ENCODE measurements at regions of chr12 and their contacts with region 1.

Region 1: GRCh38 chr12:56630160-56630632 is at the start of gene BAZ2A:
- DNase-seq: peak; percentile 93
- H3K4me3 Mint-ChIP-seq: peak within 1 kb of the TSS; percentile 98
- H3K27ac Mint-ChIP-seq: peak within 1 kb of the TSS; percentile 94
- H3K4me1 Mint-ChIP-seq: peaks cover 79% of the 10 kb centered on the region
- H3K27me3 Mint-ChIP-seq: no peaks in the 10 kb centered on the region
- total RNA-seq, gene BAZ2A: 78.3 to 80.0 TPM

Region 2: DNA sequence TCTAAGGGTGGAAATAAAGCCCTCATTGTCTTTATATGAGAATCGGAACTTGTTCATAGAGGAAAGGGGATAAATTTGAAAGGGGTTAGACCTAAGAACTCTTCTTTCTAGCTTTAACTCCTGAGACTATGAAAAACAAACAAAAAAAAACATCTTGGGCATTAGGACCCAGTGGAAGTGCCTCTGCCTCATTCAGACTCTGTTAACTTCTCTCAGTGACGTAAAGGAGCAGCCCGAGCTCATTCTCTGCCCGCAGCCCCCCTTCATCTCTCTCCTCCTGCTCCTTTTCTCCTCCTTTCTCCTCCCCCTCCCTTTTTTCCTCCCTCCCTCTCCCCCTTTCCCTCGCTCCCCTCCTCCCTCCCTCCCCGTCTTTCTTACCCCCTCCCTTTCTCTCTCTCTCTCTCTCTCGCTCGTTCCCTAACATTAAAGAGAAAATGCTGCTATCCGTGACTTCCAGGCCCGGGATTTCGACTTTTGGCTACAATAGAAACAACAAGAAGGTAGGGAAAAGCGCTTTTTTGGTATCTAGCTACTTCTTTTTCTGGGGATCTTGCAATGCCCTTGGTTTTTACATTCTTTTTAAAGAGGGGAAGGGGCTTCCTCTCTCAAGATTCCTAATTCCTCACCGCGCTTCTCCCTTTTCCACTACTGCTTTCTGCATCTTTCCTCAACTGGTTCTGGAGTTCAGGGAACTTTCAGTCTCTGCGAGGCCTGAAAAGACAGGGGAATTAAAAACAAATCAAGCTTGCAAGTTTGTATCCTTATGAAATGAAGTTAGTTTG is 108.4 kb before region 1 on chr12 and contains the start of gene RBMS2:
- CTCF ChIA-PET with region 1: no interaction called
- intact Hi-C with region 1: loop called (anchors 1 kb)
- DNase-seq: peak; percentile 56
- H3K4me3 Mint-ChIP-seq: peak within 1 kb of the TSS; percentile 62
- H3K27ac Mint-ChIP-seq: no peak within 1 kb of the TSS
- H3K4me1 Mint-ChIP-seq: peaks cover 28% of the 10 kb centered on the region
- H3K27me3 Mint-ChIP-seq: no peaks in the 10 kb centered on the region
- total RNA-seq, gene RBMS2: 2.5 to 5.1 TPM

Region 3: GRCh38 chr12:56578983-56579546 is 51.1 kb before region 1 on chr12:
- CTCF ChIA-PET with region 1: no interaction called
- intact Hi-C with region 1: no loop called
- DNase-seq: no peak
- H3K4me3 Mint-ChIP-seq: no peak overlapping the region
- H3K27ac Mint-ChIP-seq: no peak overlapping the region
- H3K4me1 Mint-ChIP-seq: peaks cover 19% of the 10 kb centered on the region
- H3K27me3 Mint-ChIP-seq: no peaks in the 10 kb centered on the region

Region 4: GRCh38 chr12:56839915-56840325 is 209.7 kb after region 1 on chr12:
- CTCF ChIA-PET with region 1: no interaction called
- intact Hi-C with region 1: no loop called
- DNase-seq: peak; percentile 70
- H3K4me3 Mint-ChIP-seq: no peak overlapping the region
- H3K27ac Mint-ChIP-seq: no peak overlapping the region
- H3K4me1 Mint-ChIP-seq: peaks cover 17% of the 10 kb centered on the region
- H3K27me3 Mint-ChIP-seq: no peaks in the 10 kb centered on the region

Measured in activated naive CD4-positive, alpha-beta T cell treated with anti-CD3 and anti-CD28 coated beads for 36 hours (primary cell).